ENCODE measurements at regions of chr5 and their contacts with region 1.

Region 1: GRCh38 chr5:96807075-96807654 is 580 bp downstream of the ERAP1 start:
- DNase-seq: no peak
- H3K4me3 ChIP-seq: peak overlapping the region; percentile 89
- CTCF ChIP-seq: no peak

Region 2: GRCh38 chr5:96785326-96786109 is 21.6 kb before region 1 on chr5:
- CTCF ChIA-PET with region 1: no interaction called
- POLR2A ChIA-PET with region 1: interaction called, 10 read pairs
- DNase-seq: no peak
- H3K4me3 ChIP-seq: no peak overlapping the region
- CTCF ChIP-seq: no peak

Region 3: GRCh38 chr5:96821260-96821916 is 14.2 kb after region 1 on chr5:
- CTCF ChIA-PET with region 1: interaction called, 4 read pairs
- POLR2A ChIA-PET with region 1: interaction called, 13 read pairs
- DNase-seq: no peak
- H3K4me3 ChIP-seq: no peak overlapping the region
- CTCF ChIP-seq: no peak

Measured in AG04449 (cell line).